SK-N-SH (cell line): ENCODE measurements at regions of chr1 and their contacts with region 1.

Region 1: DNA sequence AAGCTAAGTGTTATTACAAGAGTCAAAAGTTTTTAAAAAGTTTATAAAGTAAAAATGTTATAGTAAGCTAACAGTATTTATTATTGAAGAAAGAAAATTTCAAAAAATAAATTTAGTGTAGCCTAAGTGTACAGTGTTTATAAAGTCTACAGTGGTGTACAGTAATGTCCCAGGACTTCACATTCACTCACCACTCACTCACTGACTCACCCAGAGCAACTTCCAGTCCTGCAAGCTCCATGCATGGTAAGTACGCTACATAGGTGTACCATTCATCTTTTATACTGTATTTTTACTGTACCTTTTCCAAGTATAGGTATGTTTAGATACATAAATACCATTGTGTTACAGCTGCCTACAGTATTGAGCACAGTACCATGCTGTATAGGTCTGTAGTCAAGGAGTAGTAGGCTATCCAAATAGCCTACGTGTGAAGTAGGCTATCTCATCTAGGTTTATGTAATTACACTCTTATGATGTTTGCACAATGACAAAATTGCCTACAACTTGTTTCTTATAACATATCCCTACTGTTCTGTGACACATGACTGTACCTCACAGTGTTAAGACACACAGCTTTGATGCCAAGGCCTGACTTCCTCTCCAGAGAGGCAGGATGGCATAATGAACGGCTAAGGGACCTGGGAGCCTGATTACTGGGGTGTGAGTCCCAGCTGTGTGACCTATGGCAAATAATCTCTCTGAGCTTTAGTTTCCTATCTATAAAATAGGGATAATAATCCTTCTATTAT is 12.7 kb downstream of the DHCR24 start:
- DNase-seq: no peak
- H3K4me3 ChIP-seq: no peak overlapping the region
- H3K27ac ChIP-seq: no peak overlapping the region
- H3K4me1 ChIP-seq: 0 out of 4 replicates have a peak, but pooled peaks cover 0 to 7% of the 10 kb centered on the region in 2 experiments
- H3K27me3 ChIP-seq: no peaks in the 10 kb centered on the region
- CTCF ChIP-seq: no peak
- EP300 ChIP-seq: no peak
- RAD21 ChIP-seq: no peak

Region 2: GRCh38 chr1:54835970-54836369 is 38.3 kb before region 1 on chr1:
- CTCF ChIA-PET with region 1: no interaction called
- POLR2A ChIA-PET with region 1: no interaction called
- DNase-seq: no peak
- H3K4me3 ChIP-seq: no peak overlapping the region
- H3K27ac ChIP-seq: no peak overlapping the region
- H3K4me1 ChIP-seq: no peaks in the 10 kb centered on the region
- H3K27me3 ChIP-seq: no peaks in the 10 kb centered on the region
- CTCF ChIP-seq: no peak
- EP300 ChIP-seq: no peak
- RAD21 ChIP-seq: no peak

Region 3: DNA sequence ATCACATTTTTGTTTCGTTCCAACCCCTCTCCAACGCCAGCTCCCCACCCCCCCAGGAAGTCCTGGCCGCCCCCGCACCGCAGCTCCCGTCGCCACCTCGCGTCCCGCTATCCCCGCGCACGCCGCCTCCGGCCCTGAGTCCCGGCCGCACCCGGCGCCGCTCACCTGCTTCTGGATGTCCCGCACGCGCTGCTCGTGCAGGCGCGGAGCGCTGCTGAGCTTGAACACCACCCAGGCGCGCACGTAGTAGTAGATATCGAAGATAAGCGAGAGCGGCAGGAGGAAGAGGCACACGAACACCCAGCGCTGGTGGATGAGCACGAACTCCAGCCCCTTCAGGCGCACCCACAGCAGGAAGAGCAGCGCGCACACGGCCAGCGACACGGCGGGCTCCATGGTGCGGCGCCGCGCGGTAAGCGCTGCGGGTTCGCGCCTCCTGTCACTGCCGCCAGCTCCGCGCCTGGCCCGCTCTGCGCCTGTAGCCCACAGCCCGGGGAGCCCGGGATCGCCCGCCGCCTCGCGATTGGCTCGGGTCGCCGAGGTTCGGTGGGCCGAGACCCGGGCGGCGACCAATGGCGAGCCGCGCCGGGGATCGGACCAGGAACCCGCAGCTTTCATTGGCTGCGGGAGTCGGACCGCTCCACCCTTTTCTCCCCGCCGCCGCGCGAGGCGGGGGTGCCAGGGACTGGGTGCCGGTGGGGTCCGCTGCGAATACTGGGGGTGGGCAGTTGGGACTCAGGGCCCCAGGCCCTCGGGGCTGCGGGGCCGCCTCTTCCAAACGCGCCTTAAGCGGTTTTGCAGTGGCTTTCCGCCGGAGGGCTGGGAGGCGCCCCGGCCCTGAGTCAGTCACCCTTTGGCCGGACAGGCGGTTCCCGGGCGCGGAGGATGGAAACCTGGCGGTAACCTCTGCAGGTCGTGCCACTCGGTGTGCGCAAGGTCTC is 12.7 kb after region 1 on chr1 and contains the start of gene DHCR24:
- CTCF ChIA-PET with region 1: interaction called, 10 read pairs
- POLR2A ChIA-PET with region 1: no interaction called
- DNase-seq: peak; percentile 99
- H3K4me3 ChIP-seq: peak within 1 kb of the TSS; percentile 77 to 78
- H3K27ac ChIP-seq: peak within 1 kb of the TSS in 1 of 2 experiments; percentile 55; a peak in 1 of 4 replicates
- H3K4me1 ChIP-seq: peaks cover 0 to 28% of the 10 kb centered on the region in 2 experiments; a peak in 1 of 4 replicates
- H3K27me3 ChIP-seq: no peaks in the 10 kb centered on the region
- CTCF ChIP-seq: no peak
- EP300 ChIP-seq: no peak
- RAD21 ChIP-seq: no peak
- polyA plus RNA-seq, gene DHCR24: 4.3 and 7.1 TPM in 2 replicates